ENCODE measurements at regions of chr11 and their contacts with region 1.

Region 1: DNA sequence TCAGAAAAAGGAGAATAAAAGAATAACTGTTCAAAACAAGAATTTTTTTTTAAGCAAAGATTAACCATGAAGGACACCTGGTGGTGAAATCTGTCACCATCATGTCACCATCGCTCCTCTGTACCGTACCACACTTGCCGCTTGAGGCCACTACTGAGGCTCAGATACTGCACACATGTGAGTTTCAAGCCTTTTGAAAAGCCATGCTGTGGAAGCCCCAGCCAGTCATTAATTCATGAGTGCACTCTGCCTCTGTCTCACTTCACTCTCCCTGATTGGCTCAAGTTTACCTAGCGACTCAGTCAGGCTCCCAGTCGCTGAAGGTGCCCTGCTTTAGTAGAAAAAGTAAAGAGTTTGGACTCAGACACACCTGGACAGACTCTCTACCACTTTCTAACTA is 6.6 kb upstream of the MS4A12 start:
- DNase-seq: no peak
- H3K4me3 Mint-ChIP-seq: no peak overlapping the region
- H3K27ac Mint-ChIP-seq: no peak overlapping the region
- H3K4me1 Mint-ChIP-seq: no peaks in the 10 kb centered on the region
- H3K27me3 Mint-ChIP-seq: peaks cover 12% of the 10 kb centered on the region

Region 2: DNA sequence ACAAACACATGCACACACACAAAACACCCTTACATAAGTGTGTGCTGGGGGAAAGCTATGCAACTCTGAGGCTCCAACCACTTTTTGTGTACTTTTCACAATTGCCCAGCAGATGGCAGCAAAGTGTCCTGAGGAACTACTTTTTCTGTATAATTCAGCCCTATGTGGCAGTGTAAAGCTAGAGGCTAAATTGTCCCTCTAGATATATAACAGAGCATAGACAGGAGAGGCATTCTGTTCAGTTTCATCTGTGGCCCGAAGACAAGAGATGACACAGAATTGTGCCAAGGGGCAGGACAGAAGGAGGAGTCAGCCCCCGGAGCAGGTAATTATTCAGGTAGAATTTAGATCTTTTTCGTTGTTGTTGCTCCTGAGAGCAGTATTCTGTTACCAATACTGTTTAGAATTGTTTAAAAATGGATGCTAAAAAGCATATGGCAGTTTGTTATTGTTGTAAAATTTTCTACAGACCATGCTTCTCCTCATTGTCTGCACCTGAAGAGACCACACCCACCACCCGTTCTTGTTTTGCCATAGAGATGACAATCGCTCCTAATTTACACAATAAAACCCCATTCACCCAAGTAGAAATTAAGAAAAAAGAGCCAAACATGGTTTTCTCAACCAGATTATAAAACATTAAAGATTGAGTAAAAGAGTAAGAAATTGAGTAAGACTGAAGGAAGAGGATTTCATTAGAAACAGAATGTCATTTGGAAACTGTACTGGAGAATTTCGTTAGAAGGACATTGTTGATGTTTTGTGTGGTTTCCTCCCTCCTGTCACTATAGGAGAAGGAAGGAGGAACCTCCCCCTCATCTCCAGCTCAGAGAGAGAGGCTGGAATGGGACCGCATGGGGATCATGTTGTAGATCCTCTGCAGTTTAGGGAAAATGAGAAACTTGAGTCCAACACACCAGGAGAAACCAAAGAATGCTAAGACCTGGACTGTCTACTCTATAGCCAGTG is 122.2 kb before region 1 on chr11:
- intact Hi-C with region 1: loop called (anchors 5 kb)
- DNase-seq: peak; percentile 28
- H3K4me3 Mint-ChIP-seq: no peak overlapping the region
- H3K27ac Mint-ChIP-seq: no peak overlapping the region
- H3K4me1 Mint-ChIP-seq: no peaks in the 10 kb centered on the region
- H3K27me3 Mint-ChIP-seq: peaks cover 7% of the 10 kb centered on the region